PC-3 (cell line): ENCODE measurements at regions of chr1 and their contacts with region 1.

Region 1: DNA sequence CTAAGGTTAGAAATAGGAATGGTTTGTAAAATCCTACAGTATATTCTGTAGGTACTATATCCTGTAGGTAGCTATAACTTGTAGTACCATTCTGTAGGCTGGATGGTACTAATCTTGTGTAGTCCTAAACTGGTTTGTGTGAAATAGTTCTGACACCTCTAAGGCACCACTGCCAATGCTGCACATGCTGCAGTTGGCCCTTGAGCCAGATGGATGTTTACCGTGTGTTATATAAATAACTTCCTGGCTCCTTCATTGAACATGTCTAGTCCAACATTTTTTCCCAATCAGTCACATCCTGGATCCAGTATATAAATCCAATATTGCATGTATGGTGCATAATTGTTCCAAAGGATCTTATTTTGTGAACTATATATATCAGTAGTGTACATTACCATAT is 89.5 kb upstream of the GNG4 start:
- DNase-seq: peak; percentile 74
- ATAC-seq: peak; percentile 84
- H3K4me3 ChIP-seq: no peak overlapping the region
- H3K27ac ChIP-seq: 0 out of 2 replicates have a peak overlapping the region, but pooled peaks have one; percentile 8
- H3K4me1 ChIP-seq: peaks cover 13% of the 10 kb centered on the region
- H3K27me3 ChIP-seq: no peaks in the 10 kb centered on the region
- CTCF ChIP-seq: no peak

Region 2: GRCh38 chr1:234478481-234479309 is 1260.4 kb before region 1 on chr1 and contains the start of gene TARBP1:
- CTCF ChIA-PET with region 1: no interaction called
- POLR2A ChIA-PET with region 1: interaction called, 10 read pairs
- intact Hi-C with region 1: no loop called
- DNase-seq: peak; percentile 71
- ATAC-seq: peak; percentile 74
- H3K4me3 ChIP-seq: peak within 1 kb of the TSS; percentile 84
- H3K27ac ChIP-seq: no peak within 1 kb of the TSS
- H3K4me1 ChIP-seq: peaks cover 11% of the 10 kb centered on the region
- H3K27me3 ChIP-seq: no peaks in the 10 kb centered on the region
- CTCF ChIP-seq: no peak
- total RNA-seq, gene TARBP1: 15.1 and 27.7 TPM in 2 replicates

Region 3: DNA sequence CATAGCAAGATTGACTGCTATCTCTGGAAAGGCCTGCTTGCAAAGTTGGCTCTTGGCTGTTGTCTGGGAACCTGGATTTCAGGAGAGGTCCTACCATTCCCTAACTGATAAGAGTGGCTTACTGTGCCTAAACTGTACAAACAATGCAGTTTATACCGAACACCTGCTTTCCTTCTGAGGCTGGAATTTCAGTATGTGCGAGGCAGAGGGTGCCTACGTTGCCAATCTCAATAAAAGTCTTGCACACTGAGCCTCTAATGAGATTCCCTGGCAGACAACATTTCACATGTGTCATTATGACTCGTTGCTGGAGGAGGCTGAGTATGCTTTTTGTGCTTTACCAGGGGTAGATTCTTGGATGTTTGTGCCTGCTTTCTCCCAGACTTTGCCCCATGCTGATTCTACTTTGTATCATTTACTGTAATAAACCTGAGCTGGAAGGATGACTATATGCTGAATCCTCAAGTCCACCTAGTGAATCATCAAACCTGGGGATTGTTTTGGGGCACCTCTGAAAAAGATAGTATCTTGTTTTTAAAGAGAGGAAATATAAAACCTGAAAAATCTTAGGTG is 30.6 kb before region 1 on chr1:
- CTCF ChIA-PET with region 1: no interaction called
- POLR2A ChIA-PET with region 1: no interaction called
- intact Hi-C with region 1: loop called (anchors 1 kb)
- DNase-seq: peak; percentile 91
- ATAC-seq: peak; percentile 98
- H3K4me3 ChIP-seq: peak overlapping the region; percentile 44
- H3K27ac ChIP-seq: peak overlapping the region; percentile 94
- H3K4me1 ChIP-seq: peaks cover 44% of the 10 kb centered on the region
- H3K27me3 ChIP-seq: no peaks in the 10 kb centered on the region
- CTCF ChIP-seq: no peak

Region 4: GRCh38 chr1:236089046-236089773 is 350.1 kb after region 1 on chr1:
- CTCF ChIA-PET with region 1: no interaction called
- POLR2A ChIA-PET with region 1: no interaction called
- intact Hi-C with region 1: no loop called
- DNase-seq: peak; percentile 34
- ATAC-seq: peak; percentile 67
- H3K4me3 ChIP-seq: no peak overlapping the region
- H3K27ac ChIP-seq: no peak overlapping the region
- H3K4me1 ChIP-seq: 0 out of 2 replicates have a peak, but pooled peaks cover 4% of the 10 kb centered on the region
- H3K27me3 ChIP-seq: no peaks in the 10 kb centered on the region
- CTCF ChIP-seq: no peak